Dorsolateral prefrontal cortex (tissue), 120 donors: ENCODE measurements at regions of chr16 and their contacts with region 1.

Region 1: GRCh38 chr16:8572919-8573724 is 17.2 kb downstream of the TMEM114 start:
- DNase-seq: peak in 1 of 10 donors; percentile 30
- H3K4me3 ChIP-seq: no peak overlapping the region
- H3K27ac ChIP-seq: no peak overlapping the region
- H3K27me3 ChIP-seq: peaks cover 0 to 11% (median 0%) of the 10 kb centered on the region in 45 donors
- CTCF ChIP-seq: peak in 52 of 56 donors; percentile 17 to 62 (median 48)

Region 2: DNA sequence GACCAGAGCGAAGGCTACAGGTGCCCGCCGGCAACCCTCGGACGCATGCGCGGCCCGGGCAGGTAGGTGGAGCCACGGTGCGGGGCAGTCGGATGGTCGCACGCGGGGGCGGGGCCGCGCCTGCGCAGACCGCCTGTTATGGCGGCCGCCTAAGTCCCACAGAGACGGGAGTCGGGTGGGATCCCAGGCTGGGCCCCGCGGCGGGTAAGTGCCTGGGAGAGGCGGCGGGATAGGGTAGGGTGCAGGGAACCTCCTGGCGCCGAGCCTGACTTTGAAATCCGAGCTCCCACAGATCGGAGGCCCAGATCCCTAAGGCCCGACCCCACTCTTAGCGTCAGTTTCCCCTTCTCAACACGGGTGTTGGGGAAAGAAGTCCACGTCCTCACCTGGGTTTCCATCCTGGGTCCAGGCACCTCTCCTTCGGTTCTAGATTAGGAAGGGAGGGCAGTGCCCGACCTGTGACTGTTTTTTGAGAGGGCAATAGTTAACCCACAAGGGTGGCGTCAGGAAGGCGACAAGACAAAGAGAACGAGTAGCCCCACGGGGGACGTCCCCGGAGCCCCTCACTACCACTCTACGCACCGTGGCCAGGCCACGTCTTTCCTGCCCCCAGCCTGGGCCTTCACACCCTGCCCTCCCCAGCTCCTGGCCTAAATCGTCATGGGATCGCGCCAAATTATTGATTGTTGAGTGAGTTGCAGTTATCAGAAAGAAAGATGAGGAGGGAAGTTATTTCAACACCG is 48.6 kb after region 1 on chr16 and contains the start of gene METTL22:
- intact Hi-C with region 1: loop called in 1 of 2 experiments (anchors 5 kb)
- DNase-seq: peak; percentile 83 to 94 (median 88)
- H3K4me3 ChIP-seq: peak within 1 kb of the TSS; percentile 46 to 100 (median 91)
- H3K27ac ChIP-seq: peak within 1 kb of the TSS in 53 of 59 donors; percentile 7 to 93 (median 72)
- H3K27me3 ChIP-seq: no peaks in the 10 kb centered on the region
- CTCF ChIP-seq: peak in 32 of 56 donors; percentile 1 to 54 (median 24)
- total RNA-seq, gene METTL22: 22.8 to 59.0 (median 39.5) TPM

Region 3: DNA sequence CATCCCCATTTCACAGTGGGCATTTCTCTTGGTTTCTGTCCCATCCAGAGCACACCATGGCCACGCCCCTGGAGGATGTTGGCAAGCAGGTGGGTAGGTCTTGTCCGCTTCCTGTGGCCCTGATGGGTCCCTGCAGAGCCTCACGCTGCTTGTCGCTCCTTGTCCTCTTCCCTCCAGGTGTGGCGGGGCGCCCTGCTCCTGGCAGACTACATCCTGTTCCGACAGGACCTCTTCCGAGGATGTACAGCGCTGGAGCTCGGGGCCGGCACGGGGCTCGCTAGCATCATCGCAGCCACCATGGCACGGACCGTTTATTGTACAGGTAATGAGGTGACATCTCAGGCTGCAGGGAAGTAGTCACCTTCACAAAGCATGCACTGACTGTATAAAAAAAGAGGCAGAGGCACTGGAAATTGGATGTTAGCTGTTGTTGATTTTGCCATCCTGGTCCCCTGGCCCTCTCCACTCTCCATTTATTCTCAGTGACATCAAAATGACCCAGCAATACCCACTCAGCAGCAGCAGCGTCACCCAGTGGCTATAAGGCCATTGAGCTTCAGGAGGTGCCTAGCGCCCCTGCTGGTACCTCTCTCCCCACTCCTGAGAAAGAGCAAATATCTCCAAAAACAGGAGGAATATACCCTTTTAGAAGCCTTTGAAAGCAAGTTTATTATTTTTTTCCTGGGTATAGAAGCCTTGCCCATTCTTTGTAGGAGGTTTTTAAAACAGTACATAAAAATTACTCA is 62.0 kb after region 1 on chr16:
- intact Hi-C with region 1: loop called in 1 of 2 experiments (anchors 5 kb)
- DNase-seq: peak in 2 of 10 donors; percentile 24 to 40
- H3K4me3 ChIP-seq: no peak overlapping the region
- H3K27ac ChIP-seq: no peak overlapping the region
- H3K27me3 ChIP-seq: no peaks in the 10 kb centered on the region
- CTCF ChIP-seq: peak in 40 of 56 donors; percentile 9 to 57 (median 29)

Region 4: DNA sequence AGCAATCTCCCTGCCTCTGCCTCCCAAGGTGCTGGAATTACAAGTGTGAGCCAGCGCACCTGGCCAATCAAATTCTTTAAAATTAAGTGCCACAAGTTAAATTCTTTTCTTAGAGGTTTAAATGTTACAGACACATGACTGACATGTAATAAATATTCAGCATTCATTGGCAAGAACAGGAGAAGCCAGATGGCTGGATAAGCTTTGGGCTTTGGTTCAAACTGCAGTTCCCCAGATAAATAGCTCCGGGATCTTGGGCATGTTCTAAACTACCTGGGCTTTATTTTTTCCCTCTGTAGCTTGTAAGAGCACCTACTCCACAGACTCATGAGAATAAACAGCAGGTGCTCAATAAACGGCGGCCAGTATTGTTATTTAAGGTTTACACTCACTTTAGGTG is 135.4 kb after region 1 on chr16:
- intact Hi-C with region 1: no loop called
- DNase-seq: peak in 1 of 10 donors; percentile 59
- H3K4me3 ChIP-seq: no peak overlapping the region
- H3K27ac ChIP-seq: no peak overlapping the region
- H3K27me3 ChIP-seq: no peaks in the 10 kb centered on the region
- CTCF ChIP-seq: no peak